ENCODE measurements at regions of chr2 and their contacts with region 1.

Region 1: DNA sequence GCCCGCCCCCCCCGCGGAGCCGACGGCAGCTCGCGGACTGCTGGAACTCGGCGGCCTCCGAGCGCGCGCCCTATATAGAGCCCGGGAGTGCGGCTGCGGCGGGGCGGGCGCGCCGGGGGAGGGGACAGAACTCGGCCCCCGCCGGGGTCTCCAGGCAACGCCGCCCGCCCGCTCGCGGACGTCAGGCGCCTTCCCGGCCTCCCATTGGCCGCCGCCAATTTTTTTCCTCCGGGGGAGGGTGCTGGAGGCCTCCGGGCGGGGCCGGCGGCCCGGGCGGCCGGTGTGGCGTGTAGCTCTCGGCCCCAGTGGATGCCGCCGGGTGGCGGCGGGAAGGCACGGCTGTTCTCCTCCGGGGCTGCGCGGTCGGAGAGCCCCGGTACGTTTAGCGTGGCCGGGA is at the start of gene ZFP36L2:
- H3K4me3 Mint-ChIP-seq: peak within 1 kb of the TSS; percentile 93
- H3K27ac Mint-ChIP-seq: peak within 1 kb of the TSS; percentile 98
- H3K4me1 Mint-ChIP-seq: peaks cover 43% of the 10 kb centered on the region
- H3K27me3 Mint-ChIP-seq: no peaks in the 10 kb centered on the region

Region 2: GRCh38 chr2:42828487-42829425 is 397.8 kb before region 1 on chr2:
- intact Hi-C with region 1: loop called (anchors 5 kb)
- H3K4me3 Mint-ChIP-seq: no peak overlapping the region
- H3K27ac Mint-ChIP-seq: no peak overlapping the region
- H3K4me1 Mint-ChIP-seq: peaks cover 22% of the 10 kb centered on the region
- H3K27me3 Mint-ChIP-seq: peaks cover 16% of the 10 kb centered on the region

Region 3: GRCh38 chr2:42944779-42945415 is 281.7 kb before region 1 on chr2:
- intact Hi-C with region 1: loop called (anchors 2 kb)
- H3K4me3 Mint-ChIP-seq: no peak overlapping the region
- H3K27ac Mint-ChIP-seq: no peak overlapping the region
- H3K4me1 Mint-ChIP-seq: peaks cover 48% of the 10 kb centered on the region
- H3K27me3 Mint-ChIP-seq: peaks cover 2% of the 10 kb centered on the region

Region 4: GRCh38 chr2:43024515-43025011 is 202.0 kb before region 1 on chr2:
- intact Hi-C with region 1: loop called (anchors 2 kb)
- H3K4me3 Mint-ChIP-seq: no peak overlapping the region
- H3K27ac Mint-ChIP-seq: no peak overlapping the region
- H3K4me1 Mint-ChIP-seq: peaks cover 72% of the 10 kb centered on the region
- H3K27me3 Mint-ChIP-seq: no peaks in the 10 kb centered on the region

Region 5: GRCh38 chr2:43484323-43484930 is 257.9 kb after region 1 on chr2:
- intact Hi-C with region 1: loop called (anchors 5 kb)
- H3K4me3 Mint-ChIP-seq: no peak overlapping the region
- H3K27ac Mint-ChIP-seq: no peak overlapping the region
- H3K4me1 Mint-ChIP-seq: peaks cover 31% of the 10 kb centered on the region
- H3K27me3 Mint-ChIP-seq: no peaks in the 10 kb centered on the region

Region 6: DNA sequence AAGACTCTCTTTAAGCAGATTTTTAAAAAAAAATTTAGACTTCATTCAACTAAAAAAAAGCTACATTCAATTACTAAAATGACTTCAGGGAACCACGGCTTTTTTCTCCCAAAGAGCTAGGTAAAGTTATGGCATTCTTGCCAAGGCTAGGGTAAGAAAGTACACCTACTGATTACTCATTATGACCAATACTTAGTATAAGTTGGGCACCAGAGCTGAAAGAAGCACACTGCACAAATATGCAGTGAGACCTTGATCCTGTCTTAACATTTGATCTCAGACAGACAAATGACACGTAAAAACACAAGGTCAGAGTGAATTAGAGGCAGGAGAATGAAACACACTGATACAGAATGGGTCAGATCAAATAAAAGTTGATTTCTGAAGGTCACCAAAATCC is 280.6 kb after region 1 on chr2:
- intact Hi-C with region 1: no loop called
- H3K4me3 Mint-ChIP-seq: no peak overlapping the region
- H3K27ac Mint-ChIP-seq: no peak overlapping the region
- H3K4me1 Mint-ChIP-seq: no peaks in the 10 kb centered on the region
- H3K27me3 Mint-ChIP-seq: no peaks in the 10 kb centered on the region

Measured in dendritic cell treated with granulocyte-macrophage colony-stimulating factor and Interleukin-4, amounts not matched to agents 40 ng/mL and 50 ng/mL, for 4 days (primary cell).